KBM-7 (cell line): ENCODE measurements at regions of chr20 and their contacts with region 1.

Region 1: GRCh38 chr20:45771182-45771759 is 20.4 kb downstream of the WFDC3 start:
- DNase-seq: peak; percentile 84

Region 2: DNA sequence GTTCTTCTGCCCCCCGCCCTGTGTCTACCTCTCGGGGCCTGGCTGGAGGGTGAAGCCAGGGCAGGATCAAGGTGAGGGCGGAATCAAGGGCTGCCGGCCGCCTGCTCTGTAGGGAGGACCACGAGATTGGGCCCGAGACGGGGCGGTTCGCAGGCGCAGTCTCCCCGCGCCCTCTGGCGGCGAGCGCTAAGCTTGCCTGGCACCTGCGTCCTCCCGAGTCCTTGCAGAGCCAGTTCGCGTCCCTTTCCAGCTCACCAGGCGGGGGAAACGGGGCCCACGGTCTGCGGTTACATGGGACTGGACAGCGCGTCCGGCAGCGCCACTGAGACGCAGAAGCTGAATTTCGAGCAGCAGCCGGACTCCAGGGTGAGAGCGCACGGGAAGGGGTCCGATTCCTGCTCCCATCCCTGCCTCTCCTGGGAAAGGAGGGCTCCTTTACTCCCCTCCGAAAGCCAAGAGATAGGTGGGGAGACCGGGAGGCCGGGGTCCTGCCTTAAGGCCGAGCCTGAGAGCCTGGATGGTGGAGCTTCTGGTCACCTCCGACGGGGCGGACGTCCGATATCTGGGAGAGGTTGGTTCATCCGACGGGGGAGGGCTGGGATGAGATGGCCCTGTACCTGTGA is 459.6 kb before region 1 on chr20:
- in situ Hi-C with region 1: loop called (anchors 25 kb)
- DNase-seq: peak; percentile 56

Region 3: GRCh38 chr20:45611054-45611453 is 160.2 kb before region 1 on chr20:
- in situ Hi-C with region 1: loop called (anchors 25 kb)
- DNase-seq: peak; percentile 20